Activated CD8-positive, alpha-beta memory T cell treated with anti-CD3 and anti-CD28 coated beads, Interleukin-2, amount 10 ng/mL, durations not matched to agents 7 days and 5 days (primary cell): ENCODE measurements at regions of chr6 and their contacts with region 1.

Region 1: GRCh38 chr6:36302227-36302976 is 32.5 kb downstream of the PNPLA1 start:
- DNase-seq: peak; percentile 95
- ATAC-seq: peak; percentile 98
- H3K4me3 Mint-ChIP-seq: no peak overlapping the region
- H3K27ac Mint-ChIP-seq: no peak overlapping the region
- H3K4me1 Mint-ChIP-seq: no peaks in the 10 kb centered on the region
- H3K27me3 Mint-ChIP-seq: peaks cover 30% of the 10 kb centered on the region

Region 2: DNA sequence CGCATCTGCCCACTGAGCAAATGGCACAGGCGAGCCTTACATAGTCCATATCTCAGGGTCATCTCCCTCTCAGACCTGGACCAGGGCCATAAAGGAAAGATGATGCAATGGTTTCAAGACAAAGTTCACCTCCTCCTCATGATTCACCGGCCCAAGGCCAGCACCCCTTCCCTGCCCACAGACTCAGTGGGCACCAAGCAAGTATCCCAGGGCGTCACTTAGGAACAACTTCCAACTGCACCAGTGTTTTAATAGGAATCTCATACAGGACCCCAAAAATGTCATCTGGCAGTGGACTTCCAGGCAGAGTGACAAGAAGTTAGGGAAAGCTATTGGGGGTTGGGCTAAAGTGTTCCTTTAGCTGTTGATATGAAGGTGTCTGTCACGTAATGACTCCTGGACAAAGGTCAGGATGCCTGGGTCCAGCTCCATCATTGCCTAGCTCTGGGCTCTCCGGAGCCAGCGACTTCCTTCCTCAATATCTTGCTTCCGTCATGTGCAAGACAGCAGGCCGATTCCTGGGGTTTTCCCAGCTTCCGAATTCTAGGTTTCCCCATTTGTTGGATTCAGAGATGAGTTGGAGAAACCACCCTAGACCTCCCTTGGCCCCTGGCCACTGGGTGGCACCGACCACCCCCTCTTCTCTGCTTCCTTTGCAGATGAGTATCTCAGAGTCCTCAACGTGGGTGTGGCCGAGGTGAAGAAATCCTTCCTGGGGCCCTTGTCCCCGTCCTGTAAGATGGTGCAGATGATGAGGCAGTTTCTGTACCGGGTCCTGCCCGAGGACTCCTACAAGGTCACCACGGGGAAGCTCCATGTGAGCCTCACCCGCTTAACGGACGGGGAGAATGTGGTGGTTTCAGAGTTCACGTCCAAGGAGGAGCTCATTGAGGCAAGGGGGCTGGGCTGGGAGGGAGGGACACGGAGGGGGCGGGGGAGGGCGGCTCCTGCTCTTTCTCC is 11.5 kb before region 1 on chr6:
- CTCF ChIA-PET with region 1: interaction called, 21 read pairs
- DNase-seq: no peak
- ATAC-seq: no peak
- H3K4me3 Mint-ChIP-seq: no peak overlapping the region
- H3K27ac Mint-ChIP-seq: no peak overlapping the region
- H3K4me1 Mint-ChIP-seq: peaks cover 6% of the 10 kb centered on the region
- H3K27me3 Mint-ChIP-seq: peaks cover 26% of the 10 kb centered on the region

Region 3: DNA sequence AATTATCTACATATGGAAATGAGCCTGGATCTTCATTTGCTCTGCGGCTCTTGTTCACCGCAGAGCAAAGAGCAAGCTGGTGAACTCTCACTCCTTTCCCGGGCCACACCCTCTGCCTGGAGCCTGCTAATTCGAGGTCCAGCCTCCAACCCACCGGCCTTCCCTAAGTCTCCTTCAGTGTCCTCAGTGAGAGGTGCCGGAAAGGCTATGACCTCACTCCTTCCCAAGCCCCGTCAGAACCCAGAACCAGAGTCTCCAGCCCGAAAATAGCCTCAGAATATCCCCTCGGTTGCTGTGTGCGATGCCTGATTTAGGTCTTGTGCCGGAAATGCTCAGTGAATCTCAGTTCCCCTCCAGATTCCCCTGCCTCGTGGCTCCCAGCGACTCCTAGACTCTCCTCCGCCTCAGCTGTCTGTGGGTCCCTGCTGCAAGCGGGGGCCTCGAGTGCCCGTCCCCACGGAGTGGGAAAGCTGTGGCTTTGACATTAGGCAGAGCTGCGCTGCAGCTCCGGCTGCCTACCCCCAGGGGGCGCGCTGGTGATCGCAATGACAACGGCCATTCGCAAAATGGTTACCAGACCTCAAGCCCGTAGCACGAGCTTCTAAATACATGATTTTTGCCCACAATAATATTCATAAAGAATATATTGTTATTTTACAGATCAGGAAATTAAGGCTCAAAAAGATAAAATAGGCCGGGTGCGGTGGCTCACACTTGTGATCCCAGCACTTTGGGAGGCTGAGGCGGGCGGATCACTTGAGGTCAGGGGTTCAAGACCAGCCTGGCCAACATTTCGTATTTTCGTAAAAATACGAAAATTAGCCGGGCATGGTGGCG is 38.4 kb after region 1 on chr6:
- CTCF ChIA-PET with region 1: interaction called, 12 read pairs
- DNase-seq: peak; percentile 79
- ATAC-seq: peak; percentile 86
- H3K4me3 Mint-ChIP-seq: no peak overlapping the region
- H3K27ac Mint-ChIP-seq: no peak overlapping the region
- H3K4me1 Mint-ChIP-seq: peaks cover 22% of the 10 kb centered on the region
- H3K27me3 Mint-ChIP-seq: peaks cover 36% of the 10 kb centered on the region

Region 4: GRCh38 chr6:36360241-36361054 is 58.0 kb after region 1 on chr6:
- CTCF ChIA-PET with region 1: interaction called, 40 read pairs
- DNase-seq: peak; percentile 82
- ATAC-seq: peak; percentile 87
- H3K4me3 Mint-ChIP-seq: no peak overlapping the region
- H3K27ac Mint-ChIP-seq: no peak overlapping the region
- H3K4me1 Mint-ChIP-seq: peaks cover 37% of the 10 kb centered on the region
- H3K27me3 Mint-ChIP-seq: peaks cover 12% of the 10 kb centered on the region

Region 5: GRCh38 chr6:36820700-36821580 is 518.5 kb after region 1 on chr6:
- CTCF ChIA-PET with region 1: no interaction called
- DNase-seq: no peak
- ATAC-seq: no peak
- H3K4me3 Mint-ChIP-seq: no peak overlapping the region
- H3K27ac Mint-ChIP-seq: no peak overlapping the region
- H3K4me1 Mint-ChIP-seq: peaks cover 14% of the 10 kb centered on the region
- H3K27me3 Mint-ChIP-seq: no peaks in the 10 kb centered on the region